ENCODE measurements at regions of chr2 and their contacts with region 1.

Region 1: GRCh38 chr2:11753886-11754699 is 7.7 kb downstream of the LPIN1 start:
- DNase-seq: peak in 8 of 9 experiments; percentile 41 to 78 (median 72)
- ATAC-seq: peak; percentile 43
- H3K4me3 ChIP-seq: peak overlapping the region; percentile 31 to 40
- H3K4me3 Mint-ChIP-seq: peak overlapping the region; percentile 84
- H3K27ac ChIP-seq: peak overlapping the region; percentile 36 to 91
- H3K27ac Mint-ChIP-seq: peak overlapping the region; percentile 96
- H3K4me1 ChIP-seq: peaks cover 67% of the 10 kb centered on the region
- H3K4me1 Mint-ChIP-seq: peaks cover 81% of the 10 kb centered on the region
- H3K27me3 ChIP-seq: no peaks in the 10 kb centered on the region
- H3K27me3 Mint-ChIP-seq: no peaks in the 10 kb centered on the region
- CTCF ChIP-seq: no peak

Region 2: DNA sequence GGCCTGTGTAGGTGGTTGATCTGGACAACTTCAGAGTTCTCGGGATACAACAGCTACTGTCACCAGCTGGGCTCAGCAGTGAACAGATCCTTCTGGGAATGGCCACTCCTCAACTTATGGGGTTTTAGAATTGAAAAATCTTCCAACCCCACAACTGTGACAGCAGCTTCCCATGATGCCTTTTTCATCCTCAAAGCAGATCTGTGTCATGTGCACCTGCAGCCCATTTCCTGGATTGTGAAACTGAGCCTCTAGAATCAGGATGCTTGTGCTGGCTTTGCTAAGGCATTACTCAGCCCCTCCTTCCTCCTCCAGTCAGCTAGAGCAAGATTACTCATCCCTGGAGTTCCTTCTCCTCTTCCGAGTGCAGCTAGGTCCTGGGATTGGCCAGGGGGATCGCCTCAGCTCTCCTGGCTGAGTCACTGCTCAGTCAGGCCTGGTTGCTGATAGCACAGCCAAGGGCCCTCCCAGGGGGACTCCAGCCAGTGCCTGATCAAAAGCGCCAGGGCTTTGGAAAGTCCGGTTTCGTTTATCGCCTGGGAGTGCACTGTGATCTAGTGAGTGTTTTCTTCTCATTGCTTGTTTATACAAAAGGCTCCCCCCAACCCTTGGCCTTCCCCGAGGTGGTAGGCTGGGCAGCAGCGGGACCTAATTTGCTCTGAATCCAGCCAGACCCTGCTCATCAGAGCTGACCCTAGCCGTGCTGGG is 10.1 kb before region 1 on chr2:
- CTCF ChIA-PET with region 1: interaction called, 19 read pairs
- POLR2A ChIA-PET with region 1: interaction called, 5 read pairs
- intact Hi-C with region 1: loop called (anchors 1 kb)
- DNase-seq: peak in 8 of 9 experiments; percentile 48 to 86 (median 68)
- ATAC-seq: peak; percentile 25
- H3K4me3 ChIP-seq: peak overlapping the region in 1 of 2 experiments; percentile 9
- H3K4me3 Mint-ChIP-seq: peak overlapping the region; percentile 54
- H3K27ac ChIP-seq: peak overlapping the region in 1 of 2 experiments; percentile 20
- H3K27ac Mint-ChIP-seq: peak overlapping the region; percentile 56
- H3K4me1 ChIP-seq: peaks cover 41% of the 10 kb centered on the region
- H3K4me1 Mint-ChIP-seq: peaks cover 46% of the 10 kb centered on the region
- H3K27me3 ChIP-seq: no peaks in the 10 kb centered on the region
- H3K27me3 Mint-ChIP-seq: no peaks in the 10 kb centered on the region
- CTCF ChIP-seq: no peak

Measured in CD8-positive, alpha-beta T cell (primary cell).